ENCODE measurements at regions of chr9 and their contacts with region 1.

Region 1: GRCh38 chr9:99140685-99141314 is 35.9 kb downstream of the TGFBR1 start:
- DNase-seq: peak; percentile 72
- H3K27ac ChIP-seq: no peak overlapping the region
- CTCF ChIP-seq: peak; percentile 98

Region 2: DNA sequence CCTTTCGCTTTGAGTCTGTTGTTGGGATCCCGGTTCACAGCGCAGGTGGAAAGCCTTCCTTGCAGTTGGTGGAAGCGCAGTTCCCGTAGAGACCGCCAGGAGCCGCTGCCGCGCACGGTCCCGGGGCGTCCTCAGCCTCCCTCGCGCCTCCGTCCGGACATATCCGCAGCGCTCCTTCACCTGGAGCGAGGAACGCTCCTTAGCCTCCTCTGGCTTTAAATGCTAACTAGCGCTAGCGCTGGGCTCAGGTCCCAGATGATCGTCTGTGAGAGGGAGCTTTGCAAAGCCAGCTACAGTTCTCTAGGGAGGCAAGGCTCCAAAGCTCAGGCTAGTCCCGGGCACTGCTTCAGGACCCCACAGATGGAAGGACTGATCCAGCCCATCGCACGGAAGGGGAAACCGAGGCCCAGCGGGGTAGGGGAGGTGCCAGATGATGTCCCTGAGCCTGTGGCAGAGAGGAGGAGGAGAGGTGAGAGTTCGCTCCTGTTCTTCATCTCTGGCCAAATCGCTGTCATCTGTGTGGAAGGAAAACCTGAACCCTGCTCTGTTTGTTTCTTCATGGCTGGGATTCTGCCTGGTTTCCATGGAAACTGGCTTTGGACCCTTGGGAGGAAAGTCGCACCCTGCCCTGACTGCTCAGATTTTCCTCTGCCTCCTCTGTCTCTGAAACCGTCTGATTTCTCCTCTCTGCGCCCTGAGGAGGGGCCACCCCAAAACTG is 165.6 kb before region 1 on chr9:
- CTCF ChIA-PET with region 1: interaction called, 13 read pairs
- POLR2A ChIA-PET with region 1: no interaction called
- DNase-seq: peak; percentile 92
- H3K27ac ChIP-seq: no peak overlapping the region
- CTCF ChIP-seq: peak; percentile 97

Region 3: DNA sequence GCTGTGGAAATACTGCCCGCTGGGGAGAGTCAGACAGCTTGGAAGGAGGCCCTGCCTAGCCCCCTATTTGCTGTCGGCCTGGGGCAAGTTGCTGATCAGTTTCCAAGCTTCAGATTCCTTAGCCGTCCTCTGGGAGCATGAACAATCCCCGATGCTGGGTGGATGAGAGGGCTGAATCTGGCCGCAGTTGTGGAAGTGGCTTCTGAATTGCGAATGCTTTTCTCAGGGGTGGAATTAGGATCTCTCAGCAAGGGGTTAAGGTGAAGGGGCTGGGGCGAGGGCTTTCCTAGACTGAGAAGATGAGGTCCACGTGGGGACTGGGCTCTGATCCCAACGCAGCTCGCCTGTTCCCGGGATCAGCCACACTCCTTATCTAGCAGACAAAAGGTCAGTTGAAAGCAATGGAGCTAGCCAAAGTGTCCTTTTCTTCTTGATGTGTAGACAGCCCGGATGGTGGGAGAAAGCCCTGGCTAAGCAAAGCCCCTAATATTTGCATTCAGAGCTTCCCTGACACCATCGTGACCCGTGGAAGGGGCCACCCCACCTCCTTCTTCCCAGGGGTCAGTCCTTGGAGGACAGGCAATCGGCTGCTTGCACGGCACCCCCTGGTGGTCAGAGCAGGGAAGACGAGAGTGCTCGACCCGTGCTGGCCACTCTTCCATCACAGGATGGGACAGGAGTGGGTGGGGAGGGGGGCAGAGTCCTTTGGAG is 142.2 kb before region 1 on chr9:
- CTCF ChIA-PET with region 1: interaction called, 66 read pairs
- POLR2A ChIA-PET with region 1: no interaction called
- DNase-seq: peak; percentile 83
- H3K27ac ChIP-seq: no peak overlapping the region
- CTCF ChIP-seq: peak; percentile 87

Region 4: DNA sequence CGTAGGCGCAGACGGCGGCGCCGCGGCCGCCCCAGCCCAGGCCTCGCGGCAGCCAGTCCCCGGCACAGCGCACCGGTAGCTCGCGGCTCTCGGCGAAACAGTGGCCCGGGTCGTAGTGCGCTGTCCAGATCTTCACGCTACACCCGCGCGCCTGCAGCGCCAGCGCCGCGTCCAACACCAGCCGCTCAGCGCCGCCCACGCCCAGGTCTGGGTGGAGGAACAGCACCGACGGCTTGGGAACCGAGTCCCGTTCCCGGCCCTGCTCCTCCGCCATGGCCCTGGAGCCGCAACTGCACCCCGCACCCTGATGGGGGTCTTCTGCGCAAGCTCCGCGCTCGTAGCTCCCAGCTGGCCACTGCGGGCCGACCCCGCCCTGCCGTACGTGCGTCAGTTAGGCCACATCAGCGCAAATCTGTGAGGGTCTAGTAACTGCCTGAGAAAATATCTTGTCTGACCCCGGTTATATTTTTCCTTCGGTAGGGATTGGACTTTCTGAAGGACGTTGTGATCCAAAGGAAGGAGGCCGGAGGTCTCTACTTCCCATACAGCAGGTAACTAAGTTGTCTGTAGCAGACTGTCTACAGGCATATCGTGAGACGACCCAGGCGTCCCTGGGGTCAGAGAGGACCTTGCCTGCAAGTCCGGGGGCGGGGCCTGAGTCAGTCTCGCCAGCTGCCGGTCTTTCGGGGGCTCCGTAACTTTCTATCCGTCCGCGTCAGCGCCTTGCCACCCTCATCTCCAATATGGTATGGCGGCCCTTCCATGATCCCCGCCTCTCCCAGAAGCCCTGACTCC is 81.0 kb after region 1 on chr9 and contains the starts of genes ALG2 and SEC61B:
- CTCF ChIA-PET with region 1: no interaction called
- POLR2A ChIA-PET with region 1: no interaction called
- DNase-seq: peak; percentile 99
- H3K27ac ChIP-seq: peak within 1 kb of the TSS; percentile 88
- CTCF ChIP-seq: no peak

Region 5: GRCh38 chr9:99353408-99353807 is 212.6 kb after region 1 on chr9:
- CTCF ChIA-PET with region 1: no interaction called
- POLR2A ChIA-PET with region 1: no interaction called
- DNase-seq: no peak
- H3K27ac ChIP-seq: no peak overlapping the region
- CTCF ChIP-seq: no peak

Measured in RWPE1 (cell line).